Mammary epithelial cell (primary cell): ENCODE measurements at regions of chr15 and their contacts with region 1.

Region 1: GRCh38 chr15:73273181-73274002 is 95.4 kb downstream of the HCN4 start:
- DNase-seq: peak; percentile 47
- H3K4me3 ChIP-seq: no peak overlapping the region
- H3K27ac ChIP-seq: no peak overlapping the region
- H3K4me1 ChIP-seq: no peaks in the 10 kb centered on the region
- H3K27me3 ChIP-seq: no peaks in the 10 kb centered on the region
- CTCF ChIP-seq: peak; percentile 74 to 77

Region 2: GRCh38 chr15:72722071-72722696 is 551.2 kb before region 1 on chr15:
- CTCF ChIA-PET with region 1: no interaction called
- dilution Hi-C with region 1: no loop called
- in situ Hi-C with region 1: no loop called
- intact Hi-C with region 1: loop called (anchors 1 kb)
- DNase-seq: peak; percentile 41
- H3K4me3 ChIP-seq: no peak overlapping the region
- H3K27ac ChIP-seq: no peak overlapping the region
- H3K4me1 ChIP-seq: no peaks in the 10 kb centered on the region
- H3K27me3 ChIP-seq: no peaks in the 10 kb centered on the region
- CTCF ChIP-seq: peak; percentile 78 to 86

Region 3: DNA sequence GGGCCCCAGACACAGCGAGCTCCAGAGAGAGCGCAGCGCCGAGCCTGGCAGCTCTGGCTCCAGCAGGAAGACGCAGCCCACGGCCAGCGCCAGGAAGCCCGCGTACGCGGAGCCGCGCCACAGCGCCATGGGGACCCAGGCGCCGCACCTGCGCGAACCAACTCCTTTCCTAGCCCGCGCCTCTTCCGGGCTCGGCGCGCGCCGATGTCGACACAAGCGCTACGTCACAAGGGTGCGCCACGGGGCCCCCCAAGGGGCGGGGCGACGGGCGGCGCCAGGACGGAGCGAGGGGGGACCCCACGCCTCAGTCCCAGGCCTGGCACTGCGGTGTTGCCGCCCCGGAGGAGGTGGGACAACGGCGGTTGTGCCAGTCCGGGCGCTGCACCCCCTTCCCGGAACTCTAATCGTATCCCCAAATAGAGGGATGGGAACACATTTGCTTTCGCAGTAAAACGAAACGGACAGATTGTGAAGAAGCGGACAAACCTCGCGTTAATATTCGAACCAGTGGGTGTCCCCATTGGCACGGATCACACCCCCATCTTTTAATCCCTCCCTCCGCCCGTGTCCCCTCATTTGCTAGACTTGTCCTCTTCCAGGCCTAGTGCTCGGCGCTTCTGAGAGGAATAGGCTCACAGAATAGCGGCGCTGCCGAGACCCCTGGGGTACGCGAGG is 489.7 kb before region 1 on chr15 and contains the start of gene ADPGK:
- CTCF ChIA-PET with region 1: no interaction called
- dilution Hi-C with region 1: no loop called
- in situ Hi-C with region 1: no loop called
- intact Hi-C with region 1: loop called (anchors 5 kb)
- DNase-seq: peak; percentile 95
- H3K4me3 ChIP-seq: peak within 1 kb of the TSS; percentile 94 to 97 (median 95)
- H3K27ac ChIP-seq: peak within 1 kb of the TSS; percentile 82
- H3K4me1 ChIP-seq: peaks cover 16% of the 10 kb centered on the region
- H3K27me3 ChIP-seq: no peaks in the 10 kb centered on the region
- CTCF ChIP-seq: no peak
- total RNA-seq, gene ADPGK: 39.7 to 46.9 TPM

Region 4: DNA sequence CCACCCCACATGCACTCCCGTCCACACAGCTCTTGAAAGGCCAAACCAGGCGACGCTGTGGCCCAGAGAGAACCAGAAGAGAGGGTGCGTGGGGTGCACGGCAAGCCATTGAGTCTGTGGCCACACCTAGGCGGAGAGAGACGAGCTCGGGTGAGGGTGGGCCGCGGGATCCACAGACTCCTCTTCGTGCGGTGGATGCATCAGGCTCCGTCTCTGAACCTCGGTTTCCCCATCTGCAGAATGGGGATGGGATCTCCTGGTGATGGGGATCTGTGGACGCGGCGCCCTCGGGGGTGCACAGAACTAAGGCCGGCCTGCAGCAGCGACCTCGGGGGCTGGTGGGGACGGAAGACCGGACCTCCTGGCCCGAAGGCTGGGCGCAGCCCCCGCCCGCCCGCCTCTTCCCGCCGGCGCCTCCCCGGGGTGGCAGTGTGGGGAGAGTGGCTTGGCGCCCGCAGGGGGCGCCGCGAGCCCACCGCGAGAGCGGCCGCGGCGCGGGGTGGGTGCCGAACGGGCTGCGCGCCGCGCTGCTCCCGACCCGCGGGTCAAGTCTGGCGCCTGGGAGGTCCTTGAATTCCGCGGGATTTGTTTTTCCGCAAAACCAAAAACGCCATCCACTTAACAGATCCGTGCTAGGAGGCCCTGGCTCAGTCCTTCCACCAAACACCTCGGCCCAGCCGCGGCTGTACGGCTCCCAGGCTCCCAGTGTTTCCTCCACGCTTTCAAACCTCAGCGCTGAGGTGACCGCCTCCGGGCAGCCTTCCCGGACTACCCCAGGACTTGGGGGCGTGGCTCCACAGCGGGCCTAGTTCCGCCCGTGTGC is 476.7 kb before region 1 on chr15:
- CTCF ChIA-PET with region 1: no interaction called
- dilution Hi-C with region 1: no loop called
- in situ Hi-C with region 1: no loop called
- intact Hi-C with region 1: loop called (anchors 5 kb)
- DNase-seq: no peak
- H3K4me3 ChIP-seq: peak overlapping the region; percentile 45 to 57 (median 57)
- H3K27ac ChIP-seq: no peak overlapping the region
- H3K4me1 ChIP-seq: peaks cover 10% of the 10 kb centered on the region
- H3K27me3 ChIP-seq: no peaks in the 10 kb centered on the region
- CTCF ChIP-seq: peak; percentile 18 to 50

Region 5: DNA sequence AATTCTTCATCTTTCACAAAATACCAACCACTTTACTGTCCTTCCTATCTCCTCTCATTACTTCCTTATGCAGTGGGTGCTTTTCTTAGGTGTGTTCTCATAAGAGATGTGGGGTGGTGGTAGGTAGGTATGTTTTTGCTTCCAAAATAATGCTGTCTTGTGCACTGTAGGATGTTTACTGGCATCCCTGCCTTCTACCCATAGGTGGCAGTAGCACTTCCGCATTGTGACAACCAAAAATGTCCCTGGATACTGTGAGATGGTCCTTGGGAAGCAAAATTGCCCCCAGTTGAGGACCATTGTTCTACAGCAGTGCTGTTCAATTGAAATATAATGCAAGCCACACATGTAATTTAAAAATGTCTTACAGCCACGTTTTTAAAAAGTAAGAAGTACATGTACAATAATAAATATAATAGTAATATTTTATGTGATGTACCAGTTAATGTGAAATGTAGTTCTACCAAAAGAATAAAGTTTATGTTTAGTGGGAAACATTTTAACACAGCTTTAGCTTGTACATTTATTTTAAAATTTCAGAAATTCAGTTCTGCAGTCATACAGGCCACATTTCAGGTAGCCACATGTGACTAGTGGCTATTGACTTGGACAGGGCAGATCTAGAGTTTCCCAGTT is 146.0 kb before region 1 on chr15:
- CTCF ChIA-PET with region 1: no interaction called
- dilution Hi-C with region 1: no loop called
- in situ Hi-C with region 1: no loop called
- intact Hi-C with region 1: loop called (anchors 5 kb)
- DNase-seq: peak; percentile 14
- H3K4me3 ChIP-seq: no peak overlapping the region
- H3K27ac ChIP-seq: no peak overlapping the region
- H3K4me1 ChIP-seq: no peaks in the 10 kb centered on the region
- H3K27me3 ChIP-seq: no peaks in the 10 kb centered on the region
- CTCF ChIP-seq: peak; percentile 87 to 89

Region 6: GRCh38 chr15:73142802-73143762 is 130.3 kb before region 1 on chr15:
- CTCF ChIA-PET with region 1: no interaction called
- dilution Hi-C with region 1: no loop called
- in situ Hi-C with region 1: no loop called
- intact Hi-C with region 1: no loop called
- DNase-seq: no peak
- H3K4me3 ChIP-seq: no peak overlapping the region
- H3K27ac ChIP-seq: no peak overlapping the region
- H3K4me1 ChIP-seq: no peaks in the 10 kb centered on the region
- H3K27me3 ChIP-seq: no peaks in the 10 kb centered on the region
- CTCF ChIP-seq: no peak